ENCODE measurements at regions of chr2 and their contacts with region 1.

Region 1: DNA sequence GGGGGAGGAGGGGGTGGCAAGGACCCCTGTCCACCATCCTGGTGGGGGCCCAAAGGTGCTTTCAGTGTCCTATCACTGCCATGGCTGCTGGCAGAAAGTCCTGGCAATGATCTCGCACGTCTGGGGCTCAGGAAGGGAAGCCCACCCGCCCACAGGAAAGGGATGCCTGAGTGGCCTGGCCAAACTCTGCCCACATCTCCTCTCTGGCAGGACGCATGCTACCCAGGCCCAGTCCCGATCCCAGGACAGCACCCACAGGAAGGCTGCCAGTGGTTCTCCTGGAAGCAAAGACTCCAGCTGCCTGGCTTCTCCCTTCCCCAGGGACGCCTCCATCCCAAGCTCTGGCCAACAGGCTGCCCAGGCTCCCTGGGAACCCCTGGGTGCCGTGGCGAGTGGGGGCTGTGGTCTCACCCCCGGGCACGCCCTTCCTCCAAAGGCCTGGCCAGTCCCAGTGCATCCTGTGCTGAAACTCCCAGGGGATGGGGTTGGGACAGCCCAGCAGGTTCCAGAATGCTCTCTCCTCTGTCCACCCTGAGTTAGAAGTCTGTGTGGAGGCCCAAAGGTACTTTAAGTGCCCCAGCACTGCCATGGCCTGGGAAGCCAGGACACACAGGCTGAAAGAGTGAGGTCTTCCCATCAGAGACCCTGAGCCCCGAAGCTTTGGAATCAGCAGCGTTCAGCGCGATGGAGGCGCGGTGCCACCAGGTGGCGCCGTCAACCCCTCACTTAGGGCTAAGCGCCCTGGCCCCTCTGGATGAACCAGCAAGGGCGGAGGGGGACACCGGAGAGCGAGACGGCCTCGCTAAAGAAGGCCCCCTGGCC is 29.8 kb upstream of the TAF1B start:
- DNase-seq: peak; percentile 56
- H3K4me3 Mint-ChIP-seq: no peak overlapping the region
- H3K27ac Mint-ChIP-seq: peak overlapping the region; percentile 61
- H3K4me1 Mint-ChIP-seq: peaks cover 12% of the 10 kb centered on the region
- H3K27me3 Mint-ChIP-seq: peaks cover 11% of the 10 kb centered on the region

Region 2: DNA sequence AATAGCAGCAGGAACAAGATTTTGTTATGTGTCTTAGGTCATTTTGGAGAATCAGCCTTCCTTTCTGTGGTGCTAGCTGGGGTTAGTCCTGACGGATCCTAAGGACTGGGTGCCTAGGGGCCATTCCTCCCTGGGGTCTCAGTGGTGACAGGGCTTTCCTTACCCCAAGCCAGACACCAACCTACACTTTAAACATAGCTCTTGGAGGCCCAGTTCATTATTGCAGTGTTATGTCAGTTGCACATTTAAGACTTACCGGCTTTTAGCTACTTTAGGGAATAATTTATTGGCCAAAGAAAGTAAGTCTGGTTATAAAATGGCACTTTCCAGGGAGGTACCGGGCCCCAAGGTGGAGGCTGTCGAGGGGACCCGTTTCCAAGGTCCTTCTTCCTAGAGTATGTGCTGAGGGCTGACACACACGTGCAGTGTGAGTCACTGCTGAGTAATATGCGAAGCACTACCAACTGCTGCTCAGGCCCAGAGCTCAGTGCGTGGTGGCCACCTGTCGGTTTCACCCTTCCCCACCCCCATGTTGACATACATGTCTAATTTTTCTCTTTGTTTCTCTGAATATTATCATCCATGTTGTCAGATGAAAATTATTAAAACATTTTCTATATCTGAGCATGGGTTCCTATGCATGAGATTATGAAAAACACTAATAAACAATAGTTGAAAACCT is 101.0 kb after region 1 on chr2:
- intact Hi-C with region 1: loop called (anchors 1 kb)
- DNase-seq: no peak
- H3K4me3 Mint-ChIP-seq: no peak overlapping the region
- H3K27ac Mint-ChIP-seq: no peak overlapping the region
- H3K4me1 Mint-ChIP-seq: peaks cover 12% of the 10 kb centered on the region
- H3K27me3 Mint-ChIP-seq: no peaks in the 10 kb centered on the region